A673 (cell line): ENCODE measurements at regions of chr17 and their contacts with region 1.

Region 1: GRCh38 chr17:29005936-29006511 is at the start of gene SEZ6:
- DNase-seq: peak; percentile 87
- H3K4me3 ChIP-seq: no peak within 1 kb of the TSS
- H3K27ac ChIP-seq: no peak within 1 kb of the TSS
- H3K4me1 ChIP-seq: peaks cover 5% of the 10 kb centered on the region
- H3K27me3 ChIP-seq: peaks cover 20% of the 10 kb centered on the region
- CTCF ChIP-seq: no peak
- total RNA-seq, gene SEZ6: 1.5 and 2.6 TPM in 2 replicates

Region 2: GRCh38 chr17:28828294-28829040 is 177.6 kb before region 1 on chr17:
- CTCF ChIA-PET with region 1: no interaction called
- POLR2A ChIA-PET with region 1: interaction called, 15 read pairs
- intact Hi-C with region 1: no loop called
- DNase-seq: no peak
- H3K4me3 ChIP-seq: no peak overlapping the region
- H3K27ac ChIP-seq: no peak overlapping the region
- H3K4me1 ChIP-seq: no peaks in the 10 kb centered on the region
- H3K27me3 ChIP-seq: no peaks in the 10 kb centered on the region
- CTCF ChIP-seq: no peak

Region 3: DNA sequence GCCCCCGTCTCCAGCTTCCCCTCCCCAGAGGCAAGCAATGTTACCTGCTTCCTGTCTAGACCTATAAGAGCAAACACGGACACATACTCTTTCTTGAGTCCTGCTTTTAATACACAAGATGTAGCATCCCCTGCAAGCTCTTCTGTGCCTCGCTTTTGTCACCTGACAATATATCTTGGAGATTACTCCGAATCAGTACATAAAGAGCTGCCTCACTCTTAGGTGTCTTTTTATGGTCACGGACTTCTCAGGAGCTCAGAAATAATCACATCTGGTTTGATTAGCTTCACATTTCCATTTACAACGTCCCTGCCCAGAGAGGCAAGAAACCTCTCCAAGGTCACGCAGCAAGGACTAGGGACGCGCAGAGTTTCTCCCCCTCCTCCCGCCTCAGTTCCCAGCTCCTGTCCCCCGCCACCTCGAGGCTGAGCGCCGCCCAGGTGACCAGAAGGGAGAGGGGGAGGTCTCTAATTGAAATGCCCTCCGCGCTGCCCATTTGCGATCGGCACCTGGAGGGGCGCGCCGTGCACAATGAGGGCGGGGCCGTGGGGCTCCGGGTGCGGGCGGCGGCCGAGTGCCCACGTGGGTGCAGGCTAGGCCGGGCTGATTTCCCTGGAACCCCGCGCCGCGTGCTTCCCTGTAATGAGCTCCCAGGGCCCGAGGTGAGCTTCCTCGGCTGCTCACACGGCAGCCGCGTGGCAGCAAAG is 13.6 kb after region 1 on chr17:
- CTCF ChIA-PET with region 1: no interaction called
- POLR2A ChIA-PET with region 1: no interaction called
- intact Hi-C with region 1: no loop called
- DNase-seq: no peak
- H3K4me3 ChIP-seq: no peak overlapping the region
- H3K27ac ChIP-seq: no peak overlapping the region
- H3K4me1 ChIP-seq: peaks cover 24% of the 10 kb centered on the region
- H3K27me3 ChIP-seq: no peaks in the 10 kb centered on the region
- CTCF ChIP-seq: no peak